Activated CD4-positive, alpha-beta T cell treated with anti-CD3 and anti-CD28 coated beads for 36 hours (primary cell): ENCODE measurements at regions of chr6 and their contacts with region 1.

Region 1: DNA sequence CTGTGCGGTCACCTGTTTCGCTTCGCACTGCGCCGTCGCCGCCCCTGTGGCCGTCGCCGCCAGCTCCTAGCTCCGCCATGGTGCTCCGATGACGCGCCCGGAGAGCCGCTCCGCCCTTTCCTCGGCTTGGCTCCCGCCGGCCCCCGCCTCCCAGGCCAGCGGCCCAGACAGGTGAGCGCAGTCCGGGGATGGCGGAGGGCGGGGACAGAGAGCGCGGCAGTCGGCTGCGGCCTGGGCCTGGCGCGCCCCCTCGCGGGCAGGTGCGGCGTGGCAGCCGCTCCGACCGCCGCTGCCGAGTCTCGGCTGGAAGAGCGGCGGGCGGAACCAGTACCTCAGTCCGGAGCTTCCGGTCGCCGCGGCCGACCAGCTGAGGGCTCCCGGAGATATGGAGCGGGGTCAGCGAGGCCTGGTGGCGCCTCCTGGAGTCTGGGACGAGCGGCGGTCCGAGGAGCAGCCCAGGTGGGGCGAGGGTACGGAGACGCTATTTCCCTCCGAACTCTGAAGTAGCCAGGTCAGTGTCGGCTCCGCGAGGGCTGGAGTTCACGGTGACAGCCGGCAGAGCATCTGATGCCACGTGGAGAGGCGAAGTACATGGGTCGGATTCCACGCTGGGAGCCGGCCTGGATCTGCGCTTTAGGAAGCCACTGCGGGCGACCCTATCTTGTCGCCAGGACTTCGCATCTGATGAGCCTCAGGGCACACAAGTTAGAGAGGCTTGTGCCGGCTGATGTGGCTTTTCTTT is at the start of gene MAP7:
- DNase-seq: peak; percentile 84
- ATAC-seq: peak; percentile 96
- H3K4me3 Mint-ChIP-seq: peak within 1 kb of the TSS; percentile 54
- H3K27ac Mint-ChIP-seq: no peak within 1 kb of the TSS
- H3K4me1 Mint-ChIP-seq: peaks cover 4% of the 10 kb centered on the region
- H3K27me3 Mint-ChIP-seq: peaks cover 35% of the 10 kb centered on the region
- total RNA-seq, gene MAP7: 2.1 to 3.1 TPM

Region 2: GRCh38 chr6:136249811-136250685 is 300.5 kb before region 1 on chr6 and contains the start of gene MTFR2:
- CTCF ChIA-PET with region 1: no interaction called
- POLR2A ChIA-PET with region 1: no interaction called
- intact Hi-C with region 1: loop called in 1 of 2 experiments (anchors 1 kb)
- DNase-seq: peak; percentile 95
- ATAC-seq: peak; percentile 94
- H3K4me3 Mint-ChIP-seq: peak within 1 kb of the TSS; percentile 98
- H3K27ac Mint-ChIP-seq: peak within 1 kb of the TSS; percentile 90
- H3K4me1 Mint-ChIP-seq: peaks cover 42% of the 10 kb centered on the region
- H3K27me3 Mint-ChIP-seq: no peaks in the 10 kb centered on the region
- total RNA-seq, gene MTFR2: 26.9 to 28.9 TPM

Region 3: DNA sequence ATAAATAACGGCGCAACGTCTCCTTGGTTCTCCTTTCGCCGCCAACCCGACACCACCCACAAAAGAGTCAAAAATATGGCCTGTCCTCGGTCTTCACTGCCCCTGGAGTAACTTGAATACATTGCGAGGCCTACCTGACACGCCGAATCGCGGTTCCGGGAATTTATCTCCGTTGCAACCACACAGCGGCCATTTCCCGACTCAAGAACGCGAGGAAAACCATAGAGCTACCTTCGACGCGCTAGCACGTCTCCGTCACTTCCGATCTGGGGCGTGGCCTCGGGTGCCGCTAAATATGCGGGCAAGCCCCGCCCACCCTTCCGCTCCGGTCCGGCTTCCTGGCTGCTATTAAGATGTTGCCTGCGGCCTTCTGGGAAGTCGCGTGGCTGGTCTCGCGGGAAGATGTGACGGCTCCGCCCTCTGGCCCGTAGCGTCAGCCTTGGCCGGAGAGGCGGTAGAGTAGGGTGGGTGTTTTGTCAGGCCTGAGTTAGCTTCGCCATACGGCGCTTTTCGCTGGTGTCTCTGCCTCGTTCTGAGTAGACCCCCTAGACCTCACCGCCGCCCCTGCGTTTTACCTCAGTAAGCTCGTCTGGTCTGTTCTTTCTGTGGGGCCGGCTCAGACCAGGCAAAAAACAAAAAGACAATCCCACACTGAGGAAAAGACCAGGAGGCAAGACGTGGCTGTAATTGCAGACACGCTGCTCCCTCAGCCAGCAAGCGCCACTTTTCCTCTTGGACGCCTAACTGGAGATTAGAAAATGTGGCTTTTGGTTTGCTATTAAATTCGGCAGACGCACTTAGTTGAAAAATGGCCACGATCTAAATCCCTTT is 260.7 kb before region 1 on chr6 and contains the start of gene BCLAF1:
- CTCF ChIA-PET with region 1: interaction called, 5 read pairs
- POLR2A ChIA-PET with region 1: no interaction called
- intact Hi-C with region 1: loop called in 1 of 2 experiments (anchors 1 kb)
- DNase-seq: peak; percentile 100
- ATAC-seq: peak; percentile 83
- H3K4me3 Mint-ChIP-seq: peak within 1 kb of the TSS; percentile 100
- H3K27ac Mint-ChIP-seq: peak within 1 kb of the TSS; percentile 100
- H3K4me1 Mint-ChIP-seq: peaks cover 37% of the 10 kb centered on the region
- H3K27me3 Mint-ChIP-seq: no peaks in the 10 kb centered on the region
- total RNA-seq, gene BCLAF1: 166 to 223 TPM

Region 4: GRCh38 chr6:136378886-136379285 is 171.6 kb before region 1 on chr6:
- CTCF ChIA-PET with region 1: no interaction called
- POLR2A ChIA-PET with region 1: no interaction called
- intact Hi-C with region 1: loop called in 1 of 2 experiments (anchors 2 kb)
- DNase-seq: no peak
- ATAC-seq: no peak
- H3K4me3 Mint-ChIP-seq: no peak overlapping the region
- H3K27ac Mint-ChIP-seq: no peak overlapping the region
- H3K4me1 Mint-ChIP-seq: no peaks in the 10 kb centered on the region
- H3K27me3 Mint-ChIP-seq: peaks cover 4% of the 10 kb centered on the region

Region 5: DNA sequence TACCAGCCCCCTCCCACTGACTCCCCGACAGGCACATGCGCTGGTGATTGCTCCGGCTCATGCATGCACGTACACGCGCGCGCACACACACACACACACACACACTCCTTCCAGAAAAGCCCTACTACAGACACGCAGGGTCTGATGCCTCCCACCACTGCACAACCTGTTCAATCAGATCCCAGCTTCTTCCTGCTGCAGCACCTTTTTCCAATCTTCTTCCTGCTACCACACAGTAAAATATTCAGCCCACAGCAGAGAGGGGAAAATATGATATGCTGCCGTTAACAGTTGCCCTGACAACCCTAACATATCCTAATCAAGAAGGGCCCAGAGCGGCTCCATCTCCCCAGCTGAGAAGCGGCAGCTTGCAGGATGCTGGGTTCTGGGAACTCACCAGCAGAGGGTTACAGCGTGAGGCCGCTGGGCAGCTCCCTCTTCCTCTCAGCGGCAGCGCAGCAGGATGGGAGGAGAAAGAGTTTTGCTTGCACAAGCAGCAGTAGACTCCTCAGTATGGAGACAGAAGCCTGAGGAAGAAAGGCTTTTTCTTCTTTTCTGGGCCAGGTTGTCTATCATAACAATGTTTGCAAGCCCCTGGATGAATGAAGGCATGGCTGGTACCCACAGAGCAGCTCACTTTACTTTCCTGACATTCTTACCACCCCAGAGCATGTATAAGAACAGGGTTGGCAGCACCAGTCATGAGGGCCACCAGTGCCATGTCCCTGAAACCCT is 24.1 kb before region 1 on chr6:
- CTCF ChIA-PET with region 1: interaction called, 13 read pairs
- POLR2A ChIA-PET with region 1: no interaction called
- intact Hi-C with region 1: no loop called
- DNase-seq: peak; percentile 72
- ATAC-seq: peak; percentile 95
- H3K4me3 Mint-ChIP-seq: peak overlapping the region; percentile 53
- H3K27ac Mint-ChIP-seq: peak overlapping the region; percentile 11
- H3K4me1 Mint-ChIP-seq: peaks cover 20% of the 10 kb centered on the region
- H3K27me3 Mint-ChIP-seq: peaks cover 2% of the 10 kb centered on the region

Region 6: GRCh38 chr6:136994782-136995181 is 444.3 kb after region 1 on chr6:
- CTCF ChIA-PET with region 1: no interaction called
- POLR2A ChIA-PET with region 1: no interaction called
- intact Hi-C with region 1: no loop called
- DNase-seq: no peak
- ATAC-seq: no peak
- H3K4me3 Mint-ChIP-seq: no peak overlapping the region
- H3K27ac Mint-ChIP-seq: no peak overlapping the region
- H3K4me1 Mint-ChIP-seq: no peaks in the 10 kb centered on the region
- H3K27me3 Mint-ChIP-seq: peaks cover 32% of the 10 kb centered on the region